ENCODE measurements at regions of chr3 and their contacts with region 1.

Region 1: GRCh38 chr3:58532794-58533220 is 4.2 kb downstream of the ACOX2 start:
- DNase-seq: peak; percentile 90
- H3K4me3 Mint-ChIP-seq: no peak overlapping the region
- H3K27ac Mint-ChIP-seq: peak overlapping the region; percentile 15
- H3K4me1 Mint-ChIP-seq: peaks cover 10% of the 10 kb centered on the region
- H3K27me3 Mint-ChIP-seq: no peaks in the 10 kb centered on the region

Region 2: GRCh38 chr3:58177747-58178527 is 354.9 kb before region 1 on chr3:
- CTCF ChIA-PET with region 1: no interaction called
- intact Hi-C with region 1: loop called (anchors 2 kb)
- DNase-seq: peak; percentile 95
- H3K4me3 Mint-ChIP-seq: peak overlapping the region; percentile 59
- H3K27ac Mint-ChIP-seq: no peak overlapping the region
- H3K4me1 Mint-ChIP-seq: peaks cover 13% of the 10 kb centered on the region
- H3K27me3 Mint-ChIP-seq: peaks cover 6% of the 10 kb centered on the region

Region 3: DNA sequence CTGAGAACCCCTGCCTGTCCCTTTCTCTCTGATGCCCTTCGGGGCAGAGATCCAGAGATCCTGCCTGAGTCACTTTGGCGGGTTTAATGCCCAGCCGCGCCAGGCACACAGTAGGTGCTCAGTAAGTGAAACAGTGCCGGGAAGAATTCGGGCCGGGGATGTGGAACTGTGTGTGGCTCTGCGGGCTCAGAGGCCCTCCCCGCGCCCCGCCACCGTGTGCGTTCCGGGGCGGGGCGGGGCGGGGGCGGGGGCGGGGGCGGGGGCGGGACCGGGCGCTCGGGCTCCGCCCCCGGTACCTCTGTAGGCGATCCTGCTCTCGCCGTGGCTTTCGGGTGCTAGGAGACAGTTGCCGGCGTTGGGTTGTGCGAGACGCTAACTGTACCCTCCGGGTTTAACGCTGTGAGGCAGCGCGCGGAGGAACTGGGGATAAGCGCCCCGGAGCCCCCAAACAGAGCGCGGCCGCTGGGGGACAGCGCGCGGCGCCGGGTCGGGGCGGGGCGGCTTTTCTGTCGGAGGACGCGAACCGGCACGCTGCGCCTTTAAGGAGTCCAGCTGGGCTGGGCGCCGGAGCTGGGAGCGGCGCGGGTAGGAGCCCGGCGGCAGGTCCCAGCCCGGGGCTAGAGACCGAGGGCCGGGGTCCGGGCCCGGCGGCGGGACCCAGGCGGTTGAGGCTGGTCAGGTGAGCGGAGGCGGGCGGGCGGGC is 295.4 kb before region 1 on chr3 and contains the start of gene ABHD6:
- CTCF ChIA-PET with region 1: no interaction called
- intact Hi-C with region 1: loop called (anchors 1 kb)
- DNase-seq: peak; percentile 75
- H3K4me3 Mint-ChIP-seq: peak within 1 kb of the TSS; percentile 86
- H3K27ac Mint-ChIP-seq: peak within 1 kb of the TSS; percentile 46
- H3K4me1 Mint-ChIP-seq: peaks cover 10% of the 10 kb centered on the region
- H3K27me3 Mint-ChIP-seq: peaks cover 6% of the 10 kb centered on the region
- total RNA-seq, gene ABHD6: 1.1 to 1.6 TPM

Region 4: DNA sequence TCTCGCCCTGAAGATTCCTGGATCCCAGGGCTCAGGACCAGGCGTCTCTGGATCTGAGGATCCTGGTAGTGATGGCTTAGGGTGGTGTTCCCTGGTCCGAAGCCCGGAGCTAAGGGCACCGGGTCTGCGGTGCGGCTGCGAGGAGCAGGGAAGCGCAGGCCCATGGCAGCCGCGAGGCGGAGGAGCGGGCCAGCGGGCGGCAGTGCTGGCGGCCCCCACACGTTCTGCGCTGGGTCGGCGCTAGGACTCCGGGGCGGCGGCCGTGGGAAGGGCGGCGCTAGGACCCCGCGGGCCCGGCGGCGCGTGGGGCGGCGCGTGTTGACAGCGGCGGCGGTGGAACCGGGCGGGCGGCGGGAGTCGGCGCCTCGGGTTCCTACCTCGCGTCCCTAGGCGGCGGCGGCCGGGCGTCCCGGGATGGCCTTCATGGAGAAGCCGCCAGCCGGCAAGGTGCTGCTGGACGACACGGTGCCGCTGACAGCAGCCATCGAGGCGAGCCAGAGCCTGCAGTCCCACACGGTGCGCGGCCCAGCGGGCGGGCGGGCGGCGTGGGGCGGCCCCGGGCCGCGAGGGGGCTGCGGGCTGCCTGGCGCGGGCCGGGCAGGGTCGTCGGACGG is 200.1 kb before region 1 on chr3 and contains the start of gene PXK:
- CTCF ChIA-PET with region 1: interaction called, 3 read pairs
- intact Hi-C with region 1: loop called (anchors 2 kb)
- DNase-seq: peak; percentile 77
- H3K4me3 Mint-ChIP-seq: peak within 1 kb of the TSS; percentile 100
- H3K27ac Mint-ChIP-seq: peak within 1 kb of the TSS; percentile 91
- H3K4me1 Mint-ChIP-seq: peaks cover 28% of the 10 kb centered on the region
- H3K27me3 Mint-ChIP-seq: no peaks in the 10 kb centered on the region
- total RNA-seq, gene PXK: 44.7 to 46.1 TPM

Region 5: DNA sequence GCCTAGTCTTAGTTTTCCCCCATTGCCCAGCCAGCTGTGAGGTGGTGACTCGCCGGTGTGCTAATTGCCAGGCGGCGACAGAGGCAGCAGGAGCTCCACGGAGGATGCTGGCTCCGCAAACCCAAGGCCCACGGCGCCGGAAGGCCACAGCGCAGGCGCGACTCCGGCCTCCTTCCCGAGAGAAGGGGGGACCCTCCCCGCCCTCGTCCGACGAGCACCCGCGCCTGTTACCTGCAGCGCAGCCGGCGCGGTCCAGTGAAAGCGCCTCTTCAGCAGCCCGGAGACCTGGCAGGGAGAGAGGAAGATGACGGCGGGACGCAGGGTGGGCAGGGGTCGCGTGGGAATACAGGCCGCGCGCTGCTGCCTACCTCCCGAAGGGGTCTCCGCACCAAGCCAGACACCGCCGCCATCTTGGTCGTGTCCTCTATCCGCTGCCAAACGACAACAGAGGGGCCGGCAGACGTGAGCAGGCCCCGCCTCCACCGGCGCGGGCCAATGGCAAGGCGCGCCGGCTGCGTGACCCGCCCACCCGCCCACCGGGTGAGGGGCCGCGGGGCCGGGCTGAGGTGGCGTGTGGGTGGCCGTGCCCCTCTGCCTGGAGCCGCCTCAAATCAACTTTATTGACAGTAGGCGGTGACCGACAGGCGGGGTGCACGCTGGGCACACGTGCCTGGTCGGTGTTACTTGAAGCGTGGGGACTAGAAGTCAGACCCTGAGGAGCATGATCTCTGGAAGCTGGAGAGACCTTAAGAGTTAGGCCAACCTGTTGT is 99.2 kb before region 1 on chr3 and contains the start of gene PDHB:
- CTCF ChIA-PET with region 1: interaction called, 3 read pairs
- intact Hi-C with region 1: loop called (anchors 1 kb)
- DNase-seq: peak; percentile 89
- H3K4me3 Mint-ChIP-seq: peak within 1 kb of the TSS; percentile 91
- H3K27ac Mint-ChIP-seq: peak within 1 kb of the TSS; percentile 92
- H3K4me1 Mint-ChIP-seq: peaks cover 20% of the 10 kb centered on the region
- H3K27me3 Mint-ChIP-seq: no peaks in the 10 kb centered on the region
- total RNA-seq, gene PDHB: 51.6 to 53.7 TPM

Region 6: GRCh38 chr3:58491506-58492402 is 41.1 kb before region 1 on chr3 and contains the start of gene KCTD6:
- CTCF ChIA-PET with region 1: interaction called, 10 read pairs
- intact Hi-C with region 1: loop called (anchors 1 kb)
- DNase-seq: peak; percentile 83
- H3K4me3 Mint-ChIP-seq: peak within 1 kb of the TSS; percentile 88
- H3K27ac Mint-ChIP-seq: peak within 1 kb of the TSS; percentile 80
- H3K4me1 Mint-ChIP-seq: peaks cover 47% of the 10 kb centered on the region
- H3K27me3 Mint-ChIP-seq: no peaks in the 10 kb centered on the region
- total RNA-seq, gene KCTD6: 8.4 to 9.9 TPM

Measured in activated naive CD4-positive, alpha-beta T cell treated with anti-CD3 and anti-CD28 coated beads for 36 hours (primary cell).